IMR-90 (cell line): ENCODE measurements at regions of chr5 and their contacts with region 1.

Region 1: GRCh38 chr5:177027665-177028064 is 5.2 kb downstream of the ZNF346 start:
- DNase-seq: no peak
- ATAC-seq: no peak
- H3K4me3 ChIP-seq: no peak overlapping the region
- H3K27ac ChIP-seq: no peak overlapping the region
- H3K4me1 ChIP-seq: peaks cover 6% of the 10 kb centered on the region
- H3K27me3 ChIP-seq: no peaks in the 10 kb centered on the region
- CTCF ChIP-seq: no peak
- POLR2A ChIP-seq: no peak
- RAD21 ChIP-seq: no peak

Region 2: GRCh38 chr5:177264178-177264577 is 236.5 kb after region 1 on chr5:
- CTCF ChIA-PET with region 1: no interaction called
- POLR2A ChIA-PET with region 1: interaction called, 14 read pairs
- dilution Hi-C with region 1: no loop called
- in situ Hi-C with region 1: no loop called
- intact Hi-C with region 1: no loop called
- DNase-seq: no peak
- ATAC-seq: no peak
- H3K4me3 ChIP-seq: no peak overlapping the region
- H3K27ac ChIP-seq: no peak overlapping the region
- H3K4me1 ChIP-seq: no peaks in the 10 kb centered on the region
- H3K27me3 ChIP-seq: no peaks in the 10 kb centered on the region
- CTCF ChIP-seq: no peak
- POLR2A ChIP-seq: no peak
- RAD21 ChIP-seq: no peak